Esophagus muscularis mucosa (tissue), 4 donors: ENCODE measurements at regions of chr1 and their contacts with region 1.

Region 1: GRCh38 chr1:206912445-206913095 is 9.2 kb downstream of the FCMR start:
- DNase-seq: peak; percentile 94
- H3K4me3 ChIP-seq: no peak overlapping the region
- H3K27ac ChIP-seq: no peak overlapping the region
- H3K4me1 ChIP-seq: peaks cover 14 to 37% (median 24%) of the 10 kb centered on the region in 4 donors
- H3K27me3 ChIP-seq: peaks cover 0 to 46% (median 0%) of the 10 kb centered on the region in 4 donors
- CTCF ChIP-seq: peak; percentile 84 to 93 (median 86)
- EP300 ChIP-seq: no peak
- POLR2A ChIP-seq: no peak

Region 2: GRCh38 chr1:206489980-206490770 is 422.4 kb before region 1 on chr1:
- intact Hi-C with region 1: loop called (anchors 10 kb)
- DNase-seq: no peak
- H3K4me3 ChIP-seq: no peak overlapping the region
- H3K27ac ChIP-seq: no peak overlapping the region
- H3K4me1 ChIP-seq: peaks cover 2 to 14% (median 9%) of the 10 kb centered on the region in 4 donors
- H3K27me3 ChIP-seq: no peaks in the 10 kb centered on the region
- CTCF ChIP-seq: peak; percentile 80 to 93 (median 85)
- EP300 ChIP-seq: no peak
- POLR2A ChIP-seq: no peak

Region 3: DNA sequence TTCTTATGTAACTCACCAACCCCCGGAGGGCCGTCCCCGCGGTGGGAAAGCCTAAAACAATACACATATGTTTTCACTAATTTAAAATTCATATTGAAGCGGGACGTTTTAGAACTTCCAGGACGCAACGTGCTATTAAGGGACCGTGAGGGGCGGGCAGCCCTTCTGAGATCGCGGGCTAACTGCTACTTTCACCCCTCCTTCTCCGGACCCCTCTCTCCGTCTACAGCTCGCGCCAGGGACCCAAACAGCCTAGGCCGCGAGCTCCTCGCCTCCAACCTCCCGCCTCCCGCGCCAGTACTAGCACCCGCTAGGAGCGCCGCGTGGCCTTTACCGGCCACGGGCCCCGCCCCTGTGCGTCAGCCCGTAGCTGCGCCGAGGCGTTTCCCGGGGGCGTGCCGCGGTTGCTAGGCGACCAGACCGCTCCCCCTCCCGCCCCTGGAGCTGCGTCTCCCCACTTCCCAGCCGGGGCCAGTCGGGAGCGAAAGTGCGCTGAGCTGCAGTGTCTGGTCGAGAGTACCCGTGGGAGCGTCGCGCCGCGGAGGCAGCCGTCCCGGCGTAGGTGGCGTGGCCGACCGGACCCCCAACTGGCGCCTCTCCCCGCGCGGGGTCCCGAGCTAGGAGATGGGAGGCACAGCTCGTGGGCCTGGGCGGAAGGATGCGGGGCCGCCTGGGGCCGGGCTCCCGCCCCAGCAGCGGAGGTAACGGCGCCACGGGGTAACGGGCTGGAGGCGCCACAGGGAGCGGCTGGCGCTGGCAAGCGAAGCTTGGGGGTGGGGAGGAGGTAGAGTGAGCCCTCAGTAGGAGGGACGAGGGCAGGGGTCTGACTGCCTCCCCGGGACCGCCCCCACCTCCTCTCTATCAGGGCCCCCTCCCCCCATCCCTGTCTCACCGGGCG is 277.2 kb before region 1 on chr1 and contains the start of gene DYRK3:
- intact Hi-C with region 1: loop called (anchors 5 kb)
- DNase-seq: peak; percentile 97
- H3K4me3 ChIP-seq: peak within 1 kb of the TSS; percentile 66 to 99 (median 86)
- H3K27ac ChIP-seq: peak within 1 kb of the TSS; percentile 76 to 90 (median 86)
- H3K4me1 ChIP-seq: peaks cover 20 to 50% (median 42%) of the 10 kb centered on the region in 4 donors
- H3K27me3 ChIP-seq: no peaks in the 10 kb centered on the region
- CTCF ChIP-seq: peak in 2 of 3 experiments; percentile 24 to 25
- EP300 ChIP-seq: no peak
- POLR2A ChIP-seq: peak; percentile 79
- total RNA-seq, gene DYRK3: 5.6 to 14.7 (median 9.0) TPM

Region 4: DNA sequence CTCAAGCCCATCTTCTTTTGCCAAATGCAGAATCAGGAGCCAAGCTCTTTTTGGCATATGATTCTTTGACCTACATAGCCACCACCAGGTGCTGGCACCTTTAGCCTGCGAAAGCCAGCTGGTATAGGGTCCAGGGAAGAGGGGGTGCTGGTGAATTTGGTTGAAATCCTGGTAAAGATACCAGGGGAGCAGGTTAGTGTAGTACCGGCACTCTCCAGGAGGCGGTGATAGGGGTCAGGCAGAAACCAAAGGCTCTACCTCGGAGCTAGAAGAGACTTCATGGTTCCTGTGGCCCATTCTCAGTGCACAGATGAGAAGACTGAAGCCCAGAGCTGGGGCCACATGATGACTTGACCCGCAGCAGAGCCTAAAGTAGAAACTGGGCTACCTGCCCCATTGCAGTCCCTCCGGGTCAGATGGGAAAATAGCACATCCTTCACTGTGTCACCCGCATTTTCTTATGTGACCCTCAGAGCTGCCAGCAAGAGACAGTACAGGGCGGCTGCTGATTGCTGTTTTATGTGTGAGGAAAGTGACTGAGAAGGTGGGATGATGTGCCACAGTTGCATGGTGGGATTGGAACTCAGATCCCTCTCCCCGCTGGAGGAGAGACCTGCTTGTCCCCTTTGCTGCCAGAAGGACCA is 177.9 kb before region 1 on chr1:
- intact Hi-C with region 1: loop called (anchors 2 kb)
- DNase-seq: no peak
- H3K4me3 ChIP-seq: no peak overlapping the region
- H3K27ac ChIP-seq: no peak overlapping the region
- H3K4me1 ChIP-seq: peaks cover 19 to 41% (median 33%) of the 10 kb centered on the region in 4 donors
- H3K27me3 ChIP-seq: no peaks in the 10 kb centered on the region
- CTCF ChIP-seq: peak; percentile 51 to 77 (median 60)
- EP300 ChIP-seq: no peak
- POLR2A ChIP-seq: no peak

Region 5: GRCh38 chr1:206808615-206809014 is 104.0 kb before region 1 on chr1:
- intact Hi-C with region 1: loop called (anchors 2 kb)
- DNase-seq: no peak
- H3K4me3 ChIP-seq: no peak overlapping the region
- H3K27ac ChIP-seq: no peak overlapping the region
- H3K4me1 ChIP-seq: no peaks in the 10 kb centered on the region
- H3K27me3 ChIP-seq: no peaks in the 10 kb centered on the region
- CTCF ChIP-seq: peak in 1 of 3 experiments; percentile 28
- EP300 ChIP-seq: no peak
- POLR2A ChIP-seq: no peak

Region 6: GRCh38 chr1:206865013-206865671 is 47.4 kb before region 1 on chr1 and contains the start of gene IL20:
- intact Hi-C with region 1: loop called (anchors 5 kb)
- DNase-seq: no peak
- H3K4me3 ChIP-seq: no peak within 1 kb of the TSS
- H3K27ac ChIP-seq: no peak within 1 kb of the TSS
- H3K4me1 ChIP-seq: peaks cover 0 to 7% (median 0%) of the 10 kb centered on the region in 4 donors
- H3K27me3 ChIP-seq: peaks cover 0 to 5% (median 0%) of the 10 kb centered on the region in 4 donors
- CTCF ChIP-seq: peak; percentile 43 to 65 (median 44)
- EP300 ChIP-seq: no peak
- POLR2A ChIP-seq: no peak
- total RNA-seq, gene IL20: not detected